Pancreas (tissue), 10 donors: ENCODE measurements at regions of chr14 and their contacts with region 1.

Region 1: GRCh38 chr14:103292426-103293374 is 41.3 kb upstream of the EIF5 start:
- DNase-seq: peak; percentile 57 to 91 (median 78)
- ATAC-seq: peak; percentile 88 to 98 (median 95)
- H3K4me3 ChIP-seq: no peak overlapping the region
- H3K27ac ChIP-seq: no peak overlapping the region
- H3K4me1 ChIP-seq: no peaks in the 10 kb centered on the region
- H3K27me3 ChIP-seq: no peaks in the 10 kb centered on the region
- CTCF ChIP-seq: peak; percentile 84 to 91 (median 86)

Region 2: DNA sequence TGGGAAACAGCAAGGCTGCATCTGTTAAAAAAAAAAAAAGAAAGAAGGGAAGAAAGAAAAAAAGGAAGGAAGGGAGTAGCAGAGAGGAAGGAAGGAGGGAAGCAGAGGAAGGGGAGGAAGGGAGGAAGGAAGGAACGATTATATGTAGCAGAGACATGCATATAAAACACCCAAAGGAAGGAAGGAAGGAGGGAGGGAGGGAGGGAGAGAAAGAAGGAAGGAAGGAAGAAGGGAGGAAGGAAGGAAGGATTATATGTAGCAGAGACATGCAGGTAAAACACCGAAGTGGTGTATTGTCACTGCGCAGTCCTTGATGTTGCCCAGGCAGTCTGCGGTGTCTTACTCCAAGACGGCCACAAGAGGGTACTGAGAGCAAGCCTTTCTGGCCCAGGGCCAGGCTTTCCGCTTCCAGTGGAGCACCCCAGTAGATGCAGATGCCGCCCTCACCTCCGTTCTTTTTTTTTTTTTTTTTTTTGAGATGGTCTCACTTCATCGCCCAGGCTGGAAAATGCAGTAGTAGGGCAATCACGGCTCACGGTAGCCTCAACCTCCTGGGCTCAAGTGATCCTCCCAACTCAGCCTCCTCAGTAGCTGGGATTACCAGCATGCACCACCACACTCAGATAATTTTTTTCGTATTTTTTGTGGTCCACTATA is 214.5 kb before region 1 on chr14:
- intact Hi-C with region 1: loop called in 2 of 3 experiments (anchors 5 to 10 kb)
- DNase-seq: peak; percentile 58 to 93 (median 82)
- ATAC-seq: peak; percentile 42 to 71 (median 68)
- H3K4me3 ChIP-seq: no peak overlapping the region
- H3K27ac ChIP-seq: no peak overlapping the region
- H3K4me1 ChIP-seq: peaks cover 0 to 8% (median 0%) of the 10 kb centered on the region in 3 donors
- H3K27me3 ChIP-seq: no peaks in the 10 kb centered on the region
- CTCF ChIP-seq: peak; percentile 49 to 54 (median 52)

Region 3: DNA sequence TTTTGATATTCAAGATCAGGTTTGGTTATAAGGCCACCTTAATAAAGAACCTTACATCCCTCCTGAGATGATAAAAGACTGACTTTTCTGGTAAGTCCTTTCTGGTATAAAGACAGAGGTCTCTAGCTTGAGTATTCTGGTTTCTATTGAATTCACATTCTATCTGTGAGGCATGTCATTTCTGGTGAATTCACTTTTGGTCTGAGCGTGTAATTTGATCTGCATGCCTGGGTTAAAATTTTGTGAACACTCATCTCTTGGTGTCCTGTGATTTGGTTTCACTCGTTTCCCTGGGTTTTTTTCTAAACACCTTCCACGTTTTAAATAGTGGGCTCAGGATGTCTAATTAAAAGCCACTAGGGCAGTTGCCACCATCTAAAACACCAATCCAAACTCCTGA is 53.6 kb after region 1 on chr14:
- intact Hi-C with region 1: no loop called
- DNase-seq: no peak
- ATAC-seq: no peak
- H3K4me3 ChIP-seq: no peak overlapping the region
- H3K27ac ChIP-seq: no peak overlapping the region
- H3K4me1 ChIP-seq: peaks cover 0 to 11% (median 3%) of the 10 kb centered on the region in 3 donors
- H3K27me3 ChIP-seq: no peaks in the 10 kb centered on the region
- CTCF ChIP-seq: no peak